ENCODE measurements at regions of chr11 and their contacts with region 1.

Region 1: DNA sequence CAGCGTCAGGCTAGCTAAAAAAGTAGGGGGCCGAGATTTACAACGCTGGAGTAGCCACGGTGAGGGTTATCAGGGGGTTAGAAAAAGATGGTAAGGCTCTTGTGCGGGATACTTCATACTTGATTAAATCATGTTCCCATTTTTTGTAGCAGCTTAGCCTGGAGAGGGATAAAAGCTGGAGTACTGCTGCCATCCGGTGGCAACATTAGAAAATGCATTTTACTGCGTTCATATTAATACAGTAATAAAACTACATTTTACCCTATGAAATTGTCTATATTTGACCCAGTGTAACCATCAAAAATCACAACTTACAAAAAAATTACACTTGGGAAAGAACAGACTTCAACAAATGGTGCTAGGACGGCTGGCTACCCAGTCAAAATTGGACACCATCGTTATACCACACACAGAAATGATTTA is 17.3 kb downstream of the RPUSD4 start:
- DNase-seq: peak; percentile 50 to 59 (median 54)
- ATAC-seq: peak; percentile 91
- H3K4me3 ChIP-seq: no peak overlapping the region
- H3K27ac ChIP-seq: no peak overlapping the region
- H3K4me1 ChIP-seq: no peaks in the 10 kb centered on the region
- H3K27me3 ChIP-seq: no peaks in the 10 kb centered on the region
- CTCF ChIP-seq: peak; percentile 49 to 81 (median 70)
- EP300 ChIP-seq: no peak
- POLR2A ChIP-seq: no peak
- RAD21 ChIP-seq: peak; percentile 82

Region 2: GRCh38 chr11:125923012-125923579 is 271.0 kb before region 1 on chr11:
- CTCF ChIA-PET with region 1: interaction called, 36 read pairs
- POLR2A ChIA-PET with region 1: interaction called, 3 read pairs
- in situ Hi-C with region 1: loop called (anchors 5 kb)
- intact Hi-C with region 1: loop called (anchors 1 kb)
- DNase-seq: peak; percentile 70 to 82 (median 72)
- ATAC-seq: peak; percentile 96
- H3K4me3 ChIP-seq: no peak overlapping the region
- H3K27ac ChIP-seq: no peak overlapping the region
- H3K4me1 ChIP-seq: no peaks in the 10 kb centered on the region
- H3K27me3 ChIP-seq: peaks cover 45 to 68% of the 10 kb centered on the region in 2 experiments
- CTCF ChIP-seq: peak; percentile 80 to 90 (median 81)
- EP300 ChIP-seq: no peak
- POLR2A ChIP-seq: no peak
- RAD21 ChIP-seq: peak; percentile 84 to 88

Region 3: DNA sequence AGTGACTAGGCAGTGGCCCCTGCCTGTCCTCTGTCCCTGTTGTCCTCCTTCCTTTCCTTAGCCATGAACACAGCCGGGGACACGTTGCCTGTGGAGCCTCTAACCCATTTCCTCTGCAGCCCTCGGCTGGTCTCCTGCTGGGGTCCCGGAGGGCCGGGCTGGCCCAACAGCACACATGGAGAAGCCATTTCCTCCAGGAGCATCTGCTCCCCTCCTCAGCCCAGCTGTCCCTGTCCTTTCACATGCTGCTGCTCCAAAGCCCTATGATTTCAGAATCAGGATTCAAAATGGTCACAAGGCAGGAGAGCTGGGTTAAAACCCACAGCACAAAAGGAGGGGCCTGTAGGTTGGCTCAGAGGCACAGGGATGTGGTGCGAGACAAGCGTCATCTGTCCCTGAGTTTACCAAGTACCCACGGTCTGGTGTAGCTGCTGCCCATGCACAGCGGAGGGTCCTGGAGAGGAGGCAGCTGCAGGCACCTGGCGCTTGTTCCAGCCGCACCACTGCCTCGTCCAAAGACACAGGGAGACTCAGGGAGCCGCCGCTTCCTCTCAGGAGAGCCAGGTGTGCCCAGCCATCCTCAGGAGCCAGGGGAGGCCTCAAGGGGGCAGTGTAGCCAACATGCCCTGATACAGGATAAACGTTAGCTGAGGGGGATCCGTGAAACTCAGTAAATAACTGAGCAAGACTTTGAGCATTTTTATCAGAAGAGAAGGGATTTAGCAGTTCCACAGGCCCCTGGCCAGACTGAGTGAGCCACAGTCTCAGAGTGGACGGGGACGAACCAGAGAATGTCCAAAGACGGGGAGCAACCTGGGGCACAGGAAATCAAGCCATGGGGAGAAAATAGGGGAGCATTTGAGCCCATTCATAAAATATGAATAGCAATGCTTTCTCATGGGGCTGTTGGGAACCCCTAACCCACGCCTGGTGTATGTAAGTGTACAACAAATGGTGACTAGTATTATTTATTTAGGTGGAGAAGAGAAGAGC is 252.2 kb before region 1 on chr11:
- CTCF ChIA-PET with region 1: interaction called, 3 read pairs
- POLR2A ChIA-PET with region 1: no interaction called
- in situ Hi-C with region 1: no loop called
- intact Hi-C with region 1: loop called (anchors 5 kb)
- DNase-seq: peak; percentile 45 to 62 (median 50)
- ATAC-seq: peak; percentile 88
- H3K4me3 ChIP-seq: no peak overlapping the region
- H3K27ac ChIP-seq: no peak overlapping the region
- H3K4me1 ChIP-seq: peaks cover 2 to 10% of the 10 kb centered on the region in 2 experiments; a peak in 3 of 5 replicates
- H3K27me3 ChIP-seq: peaks cover 14 to 48% of the 10 kb centered on the region in 2 experiments
- CTCF ChIP-seq: peak; percentile 58 to 77 (median 67)
- EP300 ChIP-seq: no peak
- POLR2A ChIP-seq: no peak
- RAD21 ChIP-seq: no peak

Region 4: GRCh38 chr11:126211235-126212088 is 17.3 kb after region 1 on chr11 and contains the starts of genes FAM118B and RPUSD4:
- CTCF ChIA-PET with region 1: no interaction called
- POLR2A ChIA-PET with region 1: interaction called, 11 read pairs
- in situ Hi-C with region 1: no loop called
- intact Hi-C with region 1: no loop called
- DNase-seq: peak; percentile 97 to 99 (median 99)
- ATAC-seq: peak; percentile 97
- H3K4me3 ChIP-seq: peak within 1 kb of the TSS; percentile 73
- H3K27ac ChIP-seq: peak within 1 kb of the TSS; percentile 69
- H3K4me1 ChIP-seq: peaks cover 0 to 10% of the 10 kb centered on the region in 2 experiments; a peak in 1 of 5 replicates
- H3K27me3 ChIP-seq: no peaks in the 10 kb centered on the region
- CTCF ChIP-seq: peak in 1 of 3 experiments; percentile 12; a peak in 1 of 6 replicates
- EP300 ChIP-seq: no peak
- POLR2A ChIP-seq: peak; percentile 88
- RAD21 ChIP-seq: no peak
- polyA plus RNA-seq, gene FAM118B: 31.8 to 49.0 TPM
- polyA plus RNA-seq, gene RPUSD4: 27.4 to 52.8 TPM

Measured in K562 (cell line).